Activated CD8-positive, alpha-beta T cell treated with anti-CD3 and anti-CD28 coated beads for 36 hours (primary cell): ENCODE measurements at regions of chr6 and their contacts with region 1.

Region 1: DNA sequence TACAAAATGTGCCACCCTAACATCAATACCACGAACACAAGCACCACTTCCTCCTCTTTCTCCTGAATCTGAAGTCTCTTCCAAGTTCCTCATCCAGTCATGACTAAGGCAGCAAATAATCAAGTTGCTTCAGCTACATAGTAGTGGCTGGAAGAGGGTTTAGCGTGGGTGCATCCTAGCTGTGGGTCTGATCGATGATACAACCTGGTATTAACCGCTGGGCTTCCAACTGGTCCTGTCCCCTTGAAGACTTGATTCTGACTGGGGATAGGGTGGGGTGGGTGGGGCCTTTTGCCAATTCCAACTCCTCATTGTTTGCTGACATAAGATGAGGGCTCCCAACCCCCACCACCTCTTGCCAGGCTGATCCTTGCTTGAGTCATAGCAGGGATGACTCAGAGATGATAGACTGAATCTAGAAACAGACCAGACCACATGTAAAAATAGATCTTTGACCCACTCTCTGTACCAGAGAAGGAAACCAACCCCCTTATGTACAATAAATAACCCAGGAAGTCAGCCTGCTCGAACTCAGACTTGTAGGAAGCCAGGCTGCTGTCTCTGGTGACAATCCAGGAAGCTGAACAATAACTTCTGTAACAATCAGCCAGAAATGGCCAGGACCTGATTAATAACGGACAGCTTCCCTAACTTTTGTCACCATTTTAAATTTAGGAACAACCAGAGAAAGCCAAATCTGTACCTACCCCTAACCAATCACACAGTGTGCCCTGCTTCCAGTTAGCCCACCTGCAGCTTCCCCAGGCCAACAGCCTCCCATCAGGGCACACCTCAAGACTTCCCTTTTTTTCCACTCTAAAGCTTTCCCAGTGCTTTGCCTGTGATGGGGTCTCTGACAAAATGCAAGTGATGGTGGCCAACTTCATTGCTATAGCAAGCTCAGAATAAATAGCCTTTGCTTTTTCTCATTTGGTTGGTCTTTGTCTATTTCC is 68.9 kb upstream of the FAM184A start:
- DNase-seq: peak; percentile 87
- ATAC-seq: peak; percentile 94
- H3K4me3 Mint-ChIP-seq: no peak overlapping the region
- H3K27ac Mint-ChIP-seq: peak overlapping the region; percentile 78
- H3K4me1 Mint-ChIP-seq: peaks cover 36% of the 10 kb centered on the region
- H3K27me3 Mint-ChIP-seq: peaks cover under 1% of the 10 kb centered on the region
- CTCF ChIP-seq: no peak

Region 2: GRCh38 chr6:119034827-119035458 is 112.4 kb before region 1 on chr6:
- CTCF ChIA-PET with region 1: no interaction called
- POLR2A ChIA-PET with region 1: no interaction called
- intact Hi-C with region 1: no loop called
- DNase-seq: no peak
- ATAC-seq: no peak
- H3K4me3 Mint-ChIP-seq: no peak overlapping the region
- H3K27ac Mint-ChIP-seq: no peak overlapping the region
- H3K4me1 Mint-ChIP-seq: no peaks in the 10 kb centered on the region
- H3K27me3 Mint-ChIP-seq: no peaks in the 10 kb centered on the region
- CTCF ChIP-seq: no peak

Region 3: GRCh38 chr6:119313937-119314884 is 166.8 kb after region 1 on chr6:
- CTCF ChIA-PET with region 1: interaction called, 6 read pairs
- POLR2A ChIA-PET with region 1: no interaction called
- intact Hi-C with region 1: loop called (anchors 10 kb)
- DNase-seq: peak; percentile 63
- ATAC-seq: peak; percentile 74
- H3K4me3 Mint-ChIP-seq: peak overlapping the region; percentile 66
- H3K27ac Mint-ChIP-seq: peak overlapping the region; percentile 94
- H3K4me1 Mint-ChIP-seq: peaks cover 58% of the 10 kb centered on the region
- H3K27me3 Mint-ChIP-seq: no peaks in the 10 kb centered on the region
- CTCF ChIP-seq: no peak